ENCODE measurements at regions of chr14 and their contacts with region 1.

Region 1: DNA sequence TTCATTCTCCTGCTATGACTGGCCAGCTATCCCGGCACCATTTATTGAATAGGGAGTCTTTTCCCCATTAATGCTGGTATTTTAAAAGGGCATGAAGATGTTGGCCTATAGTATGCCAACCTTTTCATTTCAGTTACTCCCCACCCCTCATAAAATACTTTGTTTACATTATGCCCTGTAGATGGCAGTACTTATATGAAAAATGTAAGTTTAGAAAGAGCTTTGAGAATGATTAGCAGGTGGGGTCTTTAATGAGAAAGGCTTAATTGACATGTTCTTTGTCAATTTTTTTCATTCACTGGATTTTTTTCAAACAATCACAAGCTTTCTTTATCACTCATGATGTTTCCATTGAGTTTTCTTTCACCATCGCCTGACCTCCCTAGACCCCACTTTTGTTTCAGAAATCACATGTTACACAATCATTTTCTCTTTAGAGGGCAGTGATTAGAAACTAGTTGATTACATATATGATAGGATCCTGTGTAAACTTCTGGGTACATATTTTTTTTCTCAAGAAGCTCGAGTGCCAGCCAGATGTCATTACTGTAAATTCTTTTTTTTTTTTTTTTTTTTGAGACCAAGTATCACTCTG is 62.6 kb upstream of the PSMA6 start:
- DNase-seq: no peak
- ATAC-seq: peak; percentile 63
- H3K4me3 Mint-ChIP-seq: no peak overlapping the region
- H3K27ac Mint-ChIP-seq: peak overlapping the region; percentile 51
- H3K4me1 Mint-ChIP-seq: peaks cover 27% of the 10 kb centered on the region
- H3K27me3 Mint-ChIP-seq: no peaks in the 10 kb centered on the region

Region 2: DNA sequence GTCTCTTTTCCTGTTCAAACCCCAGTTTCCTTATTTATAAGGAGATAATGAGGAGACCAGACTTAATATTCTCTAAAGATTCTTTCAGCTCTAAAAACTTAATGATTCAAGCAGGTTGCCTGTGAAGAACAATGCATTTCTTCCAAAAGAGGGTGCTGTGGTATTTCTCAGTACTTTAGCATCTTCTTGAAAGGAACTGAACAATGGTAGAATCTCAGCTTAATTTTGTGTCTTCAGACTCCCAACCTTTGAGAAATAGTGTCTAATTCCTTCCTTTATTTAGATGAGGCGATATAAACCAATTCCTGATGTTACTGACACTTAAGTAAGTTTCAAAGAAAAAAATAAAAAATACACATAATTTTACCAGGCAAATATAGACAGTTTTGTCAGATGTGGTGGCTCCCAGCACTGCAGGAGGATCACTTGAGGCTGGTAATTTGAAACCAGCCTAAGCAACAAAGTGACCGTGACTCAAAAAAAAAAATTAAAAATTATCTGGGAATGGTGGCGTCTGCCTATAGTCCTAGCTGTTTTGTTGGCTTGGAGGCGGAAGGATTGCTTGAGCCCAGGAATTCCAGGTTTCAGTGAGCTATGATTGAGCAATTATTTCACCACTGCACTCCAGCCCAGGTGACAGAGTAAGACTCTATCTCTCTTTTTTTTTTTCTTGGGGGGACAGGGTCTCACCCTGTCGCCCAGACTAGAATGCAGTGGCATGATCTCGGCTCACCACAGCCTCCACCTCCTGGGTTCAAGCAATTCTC is 14.3 kb before region 1 on chr14:
- CTCF ChIA-PET with region 1: interaction called, 11 read pairs
- POLR2A ChIA-PET with region 1: no interaction called
- intact Hi-C with region 1: no loop called
- DNase-seq: no peak
- ATAC-seq: peak; percentile 58
- H3K4me3 Mint-ChIP-seq: no peak overlapping the region
- H3K27ac Mint-ChIP-seq: no peak overlapping the region
- H3K4me1 Mint-ChIP-seq: peaks cover 16% of the 10 kb centered on the region
- H3K27me3 Mint-ChIP-seq: no peaks in the 10 kb centered on the region

Region 3: GRCh38 chr14:35240231-35240630 is 10.6 kb after region 1 on chr14:
- CTCF ChIA-PET with region 1: interaction called, 11 read pairs
- POLR2A ChIA-PET with region 1: no interaction called
- intact Hi-C with region 1: no loop called
- DNase-seq: no peak
- ATAC-seq: no peak
- H3K4me3 Mint-ChIP-seq: no peak overlapping the region
- H3K27ac Mint-ChIP-seq: no peak overlapping the region
- H3K4me1 Mint-ChIP-seq: peaks cover 6% of the 10 kb centered on the region
- H3K27me3 Mint-ChIP-seq: no peaks in the 10 kb centered on the region

Measured in activated CD4-positive, alpha-beta T cell treated with anti-CD3 and anti-CD28 coated beads for 36 hours (primary cell).